Activated CD4-positive, alpha-beta T cell treated with anti-CD3 and anti-CD28 coated beads for 36 hours (primary cell): ENCODE measurements at regions of chr12 and their contacts with region 1.

Region 1: GRCh38 chr12:120228291-120229070 is 27.6 kb upstream of the RPLP0 start:
- DNase-seq: peak; percentile 96
- ATAC-seq: peak; percentile 65
- H3K4me3 Mint-ChIP-seq: peak overlapping the region; percentile 16
- H3K27ac Mint-ChIP-seq: peak overlapping the region; percentile 79
- H3K4me1 Mint-ChIP-seq: peaks cover 84% of the 10 kb centered on the region
- H3K27me3 Mint-ChIP-seq: no peaks in the 10 kb centered on the region

Region 2: DNA sequence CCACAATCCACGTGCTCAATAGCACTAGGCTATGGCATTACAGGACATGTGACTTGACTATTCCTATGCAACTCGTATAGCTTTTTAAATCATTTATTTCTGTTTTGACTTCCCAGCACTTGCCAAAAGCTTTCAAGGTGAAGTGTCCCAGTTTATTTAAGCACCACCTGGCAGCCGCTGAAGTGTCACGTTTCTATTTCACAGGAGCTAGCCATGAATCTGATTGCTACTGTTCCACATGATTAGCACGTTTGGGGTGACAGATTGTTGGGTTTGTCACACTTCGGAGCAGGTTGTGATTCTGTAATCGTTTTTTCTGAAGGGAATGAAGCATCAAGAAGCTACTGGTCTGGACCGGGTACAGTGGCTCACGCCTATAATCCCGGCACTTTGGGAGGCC is 279.3 kb before region 1 on chr12:
- CTCF ChIA-PET with region 1: no interaction called
- POLR2A ChIA-PET with region 1: no interaction called
- intact Hi-C with region 1: no loop called
- DNase-seq: no peak
- ATAC-seq: no peak
- H3K4me3 Mint-ChIP-seq: no peak overlapping the region
- H3K27ac Mint-ChIP-seq: no peak overlapping the region
- H3K4me1 Mint-ChIP-seq: no peaks in the 10 kb centered on the region
- H3K27me3 Mint-ChIP-seq: no peaks in the 10 kb centered on the region

Region 3: DNA sequence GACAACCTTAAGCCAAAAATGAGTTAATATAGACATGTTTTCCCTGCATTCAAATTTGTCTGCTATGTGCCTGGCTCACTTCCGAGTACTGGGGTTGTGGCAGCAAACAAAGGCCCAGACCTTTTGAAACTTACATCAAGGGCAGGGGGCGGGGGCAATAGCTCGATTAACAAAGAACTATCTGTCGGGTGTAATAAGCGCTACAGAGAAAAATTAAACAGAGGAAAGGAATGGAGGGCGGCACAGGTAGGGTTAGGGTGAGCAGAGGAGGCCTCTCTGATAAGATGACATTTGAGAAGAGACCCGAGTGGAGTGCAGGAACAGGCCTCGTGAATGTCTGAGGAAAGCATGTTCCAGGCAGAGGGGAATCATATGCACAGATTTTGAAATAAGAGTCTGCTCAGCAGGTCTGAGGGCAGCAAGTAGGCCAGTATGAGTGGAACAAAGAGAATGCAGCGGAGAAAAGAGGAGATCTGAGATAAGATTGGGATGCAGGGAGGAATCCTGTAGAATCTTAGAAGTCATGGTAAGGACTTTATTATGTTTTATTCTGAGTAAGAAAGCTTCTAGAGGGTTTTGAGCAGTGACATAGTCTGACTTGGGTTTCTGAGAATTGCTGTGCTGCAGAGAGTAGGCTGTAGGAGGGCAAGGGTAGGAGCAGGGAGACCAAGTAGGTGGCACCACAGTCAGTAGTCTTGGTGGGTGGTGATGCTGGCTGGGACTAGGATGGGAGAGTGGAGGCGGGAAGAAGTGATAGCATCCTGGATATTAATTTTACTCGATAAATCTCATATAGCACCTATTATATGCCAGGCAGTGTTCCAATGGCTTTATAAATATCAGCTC is 186.9 kb before region 1 on chr12:
- CTCF ChIA-PET with region 1: no interaction called
- POLR2A ChIA-PET with region 1: no interaction called
- intact Hi-C with region 1: no loop called
- DNase-seq: peak; percentile 41
- ATAC-seq: peak; percentile 63
- H3K4me3 Mint-ChIP-seq: no peak overlapping the region
- H3K27ac Mint-ChIP-seq: peak overlapping the region; percentile 72
- H3K4me1 Mint-ChIP-seq: peaks cover 33% of the 10 kb centered on the region
- H3K27me3 Mint-ChIP-seq: no peaks in the 10 kb centered on the region

Region 4: GRCh38 chr12:120194534-120195395 is 33.7 kb before region 1 on chr12 and contains the start of gene GCN1:
- CTCF ChIA-PET with region 1: interaction called, 7 read pairs
- POLR2A ChIA-PET with region 1: interaction called, 42 read pairs
- intact Hi-C with region 1: no loop called
- DNase-seq: peak; percentile 93
- ATAC-seq: peak; percentile 81
- H3K4me3 Mint-ChIP-seq: peak within 1 kb of the TSS; percentile 98
- H3K27ac Mint-ChIP-seq: peak within 1 kb of the TSS; percentile 92
- H3K4me1 Mint-ChIP-seq: peaks cover 45% of the 10 kb centered on the region
- H3K27me3 Mint-ChIP-seq: no peaks in the 10 kb centered on the region
- total RNA-seq, gene GCN1: 125 to 139 TPM

Region 5: DNA sequence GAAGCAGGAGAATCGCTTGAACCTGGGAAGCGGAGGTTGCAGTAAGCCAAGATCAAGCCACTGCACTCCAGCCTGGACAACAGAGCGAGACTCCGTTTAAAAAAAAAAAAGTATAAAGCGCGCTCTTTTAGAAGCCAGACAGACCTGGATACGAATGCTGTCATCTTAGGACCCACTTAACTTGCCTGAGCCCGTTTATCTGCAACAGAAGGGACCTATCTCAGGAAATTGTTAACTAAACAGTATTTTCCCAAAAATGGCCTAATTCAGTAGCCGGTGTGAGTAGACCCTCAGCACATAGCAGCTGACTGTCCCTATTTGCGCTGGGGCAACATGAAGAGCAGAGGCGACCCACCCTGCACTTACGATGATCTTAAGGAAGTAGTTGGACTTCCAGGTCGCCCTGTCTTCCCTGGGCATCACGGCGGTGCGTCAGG is 28.1 kb before region 1 on chr12:
- CTCF ChIA-PET with region 1: interaction called, 45 read pairs
- POLR2A ChIA-PET with region 1: interaction called, 42 read pairs
- intact Hi-C with region 1: loop called (anchors 1 to 2 kb)
- DNase-seq: no peak
- ATAC-seq: no peak
- H3K4me3 Mint-ChIP-seq: peak overlapping the region; percentile 98
- H3K27ac Mint-ChIP-seq: peak overlapping the region; percentile 99
- H3K4me1 Mint-ChIP-seq: peaks cover 39% of the 10 kb centered on the region
- H3K27me3 Mint-ChIP-seq: no peaks in the 10 kb centered on the region

Region 6: DNA sequence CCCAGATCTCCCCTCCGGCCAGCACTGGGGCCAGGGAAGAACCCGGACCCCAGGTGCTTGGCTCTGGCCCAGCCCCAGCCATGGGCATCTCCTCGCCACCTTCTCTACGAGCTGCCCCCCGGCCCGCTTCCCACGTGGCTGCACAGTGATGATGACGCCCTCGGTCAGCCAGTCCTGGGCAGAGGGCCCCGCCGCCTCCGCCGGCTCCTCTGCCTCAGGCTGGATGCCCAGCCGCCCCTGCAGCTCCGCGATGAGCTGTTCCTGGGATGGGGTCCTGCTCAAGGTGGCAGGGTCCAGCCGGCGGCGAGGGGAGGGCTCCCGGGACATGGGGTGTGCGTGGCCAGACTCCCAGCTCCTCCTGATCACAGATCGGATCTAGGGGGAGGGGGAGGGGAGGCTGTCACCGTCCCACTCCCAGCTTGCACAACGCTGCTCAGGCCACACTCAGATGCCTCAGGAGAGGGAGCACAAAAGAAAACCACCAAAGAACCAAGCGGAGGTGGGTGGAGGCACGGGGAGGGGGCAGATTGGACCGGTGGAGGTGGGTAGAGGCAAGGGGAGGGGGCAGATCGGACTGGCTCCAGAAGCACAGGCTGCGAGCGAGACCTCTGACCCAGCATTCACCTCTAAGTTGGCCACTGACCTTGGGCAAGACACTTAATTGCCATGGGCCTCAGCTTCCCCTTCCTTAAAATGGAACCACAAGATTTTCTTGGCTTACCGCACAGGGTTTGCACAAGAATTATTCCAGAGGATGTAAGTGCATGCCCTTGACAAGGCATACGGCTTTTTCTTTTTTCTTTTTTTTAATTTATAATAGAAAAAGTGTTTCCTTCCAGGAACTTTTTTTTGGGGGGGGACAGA is 11.5 kb before region 1 on chr12:
- CTCF ChIA-PET with region 1: interaction called, 25 read pairs
- POLR2A ChIA-PET with region 1: no interaction called
- intact Hi-C with region 1: no loop called
- DNase-seq: no peak
- ATAC-seq: no peak
- H3K4me3 Mint-ChIP-seq: no peak overlapping the region
- H3K27ac Mint-ChIP-seq: no peak overlapping the region
- H3K4me1 Mint-ChIP-seq: no peaks in the 10 kb centered on the region
- H3K27me3 Mint-ChIP-seq: no peaks in the 10 kb centered on the region

Region 7: DNA sequence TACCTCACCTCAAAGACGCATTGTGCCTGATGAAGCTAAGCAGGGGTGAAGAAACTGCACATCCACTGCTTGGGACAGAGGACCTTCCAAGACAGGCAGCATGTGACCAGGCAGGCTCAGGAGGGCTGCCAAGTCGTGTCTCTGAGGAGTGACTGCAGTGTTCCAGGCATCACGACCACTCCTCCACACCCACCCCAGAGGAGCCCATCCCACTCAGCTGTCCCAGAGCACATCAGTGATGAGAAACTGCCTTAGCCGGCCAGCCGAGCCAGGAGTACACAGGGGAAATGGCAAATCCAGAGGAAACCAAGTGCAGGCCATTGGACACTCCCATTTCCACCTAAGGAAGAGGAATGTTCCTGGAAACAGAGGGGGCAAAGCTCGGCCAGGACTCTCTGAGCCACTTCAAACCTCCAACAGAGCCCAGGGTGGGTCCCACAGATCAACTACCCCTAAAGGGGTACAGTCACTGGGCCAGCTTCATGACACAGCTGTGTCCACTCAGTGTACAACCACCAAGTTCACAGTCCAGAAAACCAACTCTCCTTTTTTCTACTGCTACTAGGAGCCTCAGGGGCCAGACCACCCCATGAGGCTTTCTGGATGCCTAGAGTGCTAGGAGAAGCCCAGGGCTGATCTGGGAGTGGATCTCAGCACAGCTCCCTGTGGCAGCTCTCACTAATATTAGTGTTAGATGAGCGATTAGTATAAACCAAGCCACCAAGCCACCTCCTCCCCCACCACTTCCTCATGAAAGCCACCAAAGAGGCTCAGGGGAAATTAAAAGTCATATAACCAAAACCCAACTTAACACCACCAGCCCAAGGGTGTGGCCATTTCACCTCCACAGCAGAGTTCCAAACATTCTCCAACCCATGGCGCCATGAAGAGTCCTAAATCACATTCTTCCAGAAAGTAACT is 21.7 kb after region 1 on chr12:
- CTCF ChIA-PET with region 1: interaction called, 518 read pairs
- POLR2A ChIA-PET with region 1: interaction called, 5 read pairs
- intact Hi-C with region 1: loop called (anchors 1 kb)
- DNase-seq: peak; percentile 51
- ATAC-seq: peak; percentile 10
- H3K4me3 Mint-ChIP-seq: peak overlapping the region; percentile 10
- H3K27ac Mint-ChIP-seq: peak overlapping the region; percentile 74
- H3K4me1 Mint-ChIP-seq: peaks cover 80% of the 10 kb centered on the region
- H3K27me3 Mint-ChIP-seq: no peaks in the 10 kb centered on the region

Region 8: GRCh38 chr12:120265473-120266179 is 37.1 kb after region 1 on chr12 and contains the start of gene PXN:
- CTCF ChIA-PET with region 1: interaction called, 518 read pairs
- POLR2A ChIA-PET with region 1: interaction called, 61 read pairs
- intact Hi-C with region 1: loop called (anchors 1 kb)
- DNase-seq: peak; percentile 95
- ATAC-seq: peak; percentile 79
- H3K4me3 Mint-ChIP-seq: peak within 1 kb of the TSS; percentile 95
- H3K27ac Mint-ChIP-seq: peak within 1 kb of the TSS; percentile 85
- H3K4me1 Mint-ChIP-seq: peaks cover 46% of the 10 kb centered on the region
- H3K27me3 Mint-ChIP-seq: no peaks in the 10 kb centered on the region
- total RNA-seq, gene PXN: 74.5 to 104 TPM

Region 9: DNA sequence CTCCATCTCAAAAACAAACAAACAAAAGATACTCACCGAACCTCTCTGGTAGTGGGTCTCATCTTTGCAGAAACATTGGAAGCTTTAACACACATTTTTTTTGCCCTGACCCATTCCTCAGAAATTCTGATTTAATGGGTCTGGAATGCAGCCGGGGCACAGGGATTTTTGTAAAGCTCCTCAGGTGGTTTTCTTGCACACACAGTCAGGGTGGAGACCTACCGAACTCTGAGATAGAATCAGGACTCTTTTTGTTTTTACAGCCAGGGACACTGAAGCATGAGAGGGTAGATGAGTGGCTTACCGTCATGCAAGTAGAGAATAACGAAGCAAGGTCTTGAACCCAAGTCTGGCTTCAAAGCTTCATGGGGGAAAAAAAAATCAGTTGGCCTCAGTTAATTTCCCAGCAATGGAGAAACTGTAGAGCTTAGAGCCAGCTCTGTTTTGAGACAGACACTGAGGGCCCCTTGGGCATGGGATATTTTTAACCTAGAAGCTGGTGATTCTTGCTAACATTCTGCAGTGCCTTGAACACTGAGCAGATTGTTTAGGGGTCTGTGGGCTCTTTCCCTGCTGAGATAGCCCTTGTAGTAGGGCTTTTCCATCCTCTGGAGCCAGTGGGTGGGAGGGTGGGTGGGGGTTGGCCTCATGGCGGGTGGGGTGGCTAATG is 58.5 kb after region 1 on chr12:
- CTCF ChIA-PET with region 1: interaction called, 72 read pairs
- POLR2A ChIA-PET with region 1: interaction called, 275 read pairs
- intact Hi-C with region 1: loop called (anchors 1 kb)
- DNase-seq: no peak
- ATAC-seq: no peak
- H3K4me3 Mint-ChIP-seq: no peak overlapping the region
- H3K27ac Mint-ChIP-seq: no peak overlapping the region
- H3K4me1 Mint-ChIP-seq: peaks cover 7% of the 10 kb centered on the region
- H3K27me3 Mint-ChIP-seq: no peaks in the 10 kb centered on the region